Tibial artery (tissue), 4 donors: ENCODE measurements at regions of chr1 and their contacts with region 1.

Region 1: DNA sequence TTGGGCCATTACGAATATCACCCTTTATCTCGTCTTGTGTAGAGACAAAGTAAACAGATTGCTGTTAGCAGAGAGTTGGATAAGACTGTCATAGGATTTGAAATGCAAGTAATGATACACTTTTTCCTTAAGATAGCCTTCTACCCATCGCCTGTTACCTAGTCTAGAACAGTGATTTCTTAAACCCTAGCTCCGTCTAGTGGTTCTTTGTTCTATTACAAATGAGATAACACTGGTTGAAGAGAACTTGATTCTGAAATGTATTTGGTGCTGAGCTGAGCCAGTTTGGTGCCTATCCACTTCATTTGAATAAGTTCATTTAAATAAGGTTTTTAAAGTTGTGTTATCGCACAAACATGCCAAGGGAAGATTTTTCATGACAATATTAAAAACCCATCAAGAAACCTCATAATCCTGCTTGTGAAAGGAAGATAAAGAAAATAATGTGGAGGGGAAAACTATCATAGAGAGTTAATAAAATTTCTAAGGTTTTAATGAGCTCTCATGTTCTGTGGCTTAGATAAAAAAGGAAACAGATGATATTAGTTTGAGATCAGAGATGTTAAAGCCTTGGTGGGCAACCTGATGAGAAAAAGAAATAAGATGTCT is 1.5 kb upstream of the KCNH1 start:
- DNase-seq: no peak
- H3K4me3 ChIP-seq: no peak overlapping the region
- H3K27ac ChIP-seq: no peak overlapping the region
- H3K4me1 ChIP-seq: peaks cover 0 to 22% (median 16%) of the 10 kb centered on the region in 4 donors
- H3K27me3 ChIP-seq: peaks cover 0 to 31% of the 10 kb centered on the region in 2 donors
- CTCF ChIP-seq: peak; percentile 40 to 56

Region 2: GRCh38 chr1:210407207-210407886 is 728.1 kb before region 1 on chr1:
- intact Hi-C with region 1: loop called (anchors 5 kb)
- DNase-seq: peak in 1 of 2 donors; percentile 56
- H3K4me3 ChIP-seq: no peak overlapping the region
- H3K27ac ChIP-seq: no peak overlapping the region
- H3K4me1 ChIP-seq: no peaks in the 10 kb centered on the region
- H3K27me3 ChIP-seq: no peaks in the 10 kb centered on the region
- CTCF ChIP-seq: peak; percentile 81 to 98

Region 3: DNA sequence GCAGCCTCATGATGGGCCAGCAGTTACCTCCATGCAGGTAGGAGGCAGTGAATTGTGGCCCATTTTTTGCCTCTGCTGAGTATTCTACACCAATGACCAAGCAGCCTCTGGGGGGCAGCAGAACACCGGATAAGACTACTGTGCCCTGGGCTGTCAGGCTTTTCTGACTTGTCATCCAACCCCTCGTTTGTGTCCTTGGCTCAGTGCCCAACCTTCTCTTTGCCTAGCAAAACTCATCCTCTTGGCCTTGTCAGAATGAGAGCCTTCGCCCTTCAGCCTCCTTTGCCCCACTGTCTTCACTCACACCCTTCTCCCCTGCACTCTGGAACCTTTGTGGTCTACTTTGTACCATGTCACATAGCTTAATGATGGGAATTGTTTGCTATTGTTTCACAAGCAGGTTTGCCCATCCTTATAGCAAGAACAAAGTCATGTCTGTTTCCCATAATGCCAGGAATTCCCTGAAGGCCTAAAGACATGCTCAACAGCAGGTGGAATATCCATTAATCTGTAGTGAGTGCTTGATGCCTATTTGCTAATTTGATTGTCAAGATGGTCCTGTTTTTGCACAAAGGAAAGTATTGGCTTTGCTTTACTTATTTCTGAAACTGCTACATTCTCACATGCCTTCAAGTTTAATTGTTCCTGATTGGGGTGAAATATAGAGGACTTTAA is 550.9 kb before region 1 on chr1:
- intact Hi-C with region 1: loop called (anchors 5 kb)
- DNase-seq: peak; percentile 67 to 78
- H3K4me3 ChIP-seq: no peak overlapping the region
- H3K27ac ChIP-seq: no peak overlapping the region
- H3K4me1 ChIP-seq: no peaks in the 10 kb centered on the region
- H3K27me3 ChIP-seq: no peaks in the 10 kb centered on the region
- CTCF ChIP-seq: peak; percentile 45 to 56